Activated naive CD4-positive, alpha-beta T cell treated with anti-CD3 and anti-CD28 coated beads, Interleukin-2, amount 10 ng/mL, durations not matched to agents 7 days and 5 days (primary cell): ENCODE measurements at regions of chr3 and their contacts with region 1.

Region 1: DNA sequence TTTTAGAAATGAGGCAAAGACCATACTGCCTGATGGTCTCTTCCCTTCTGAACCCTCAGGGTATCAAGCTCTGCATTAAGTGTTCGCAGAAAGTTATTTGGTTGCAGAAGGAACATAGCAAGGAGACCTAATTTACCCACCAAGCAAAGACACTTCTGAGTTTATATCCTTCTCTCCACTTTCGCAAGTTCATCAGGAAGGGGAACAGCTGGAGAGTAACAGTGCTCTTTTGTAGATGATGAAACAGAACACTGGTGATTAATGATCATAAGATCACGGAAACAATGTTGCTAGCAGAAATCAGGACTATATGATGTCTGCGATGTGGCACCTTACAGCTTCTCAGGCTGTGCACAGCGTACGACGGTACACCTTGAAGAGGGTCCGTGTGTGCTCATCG is 62.1 kb downstream of the NCEH1 start:
- DNase-seq: no peak
- H3K4me3 Mint-ChIP-seq: no peak overlapping the region
- H3K27ac Mint-ChIP-seq: no peak overlapping the region
- H3K4me1 Mint-ChIP-seq: no peaks in the 10 kb centered on the region
- H3K27me3 Mint-ChIP-seq: no peaks in the 10 kb centered on the region

Region 2: GRCh38 chr3:172208586-172209332 is 440.0 kb before region 1 on chr3:
- CTCF ChIA-PET with region 1: no interaction called
- DNase-seq: no peak
- H3K4me3 Mint-ChIP-seq: no peak overlapping the region
- H3K27ac Mint-ChIP-seq: no peak overlapping the region
- H3K4me1 Mint-ChIP-seq: no peaks in the 10 kb centered on the region
- H3K27me3 Mint-ChIP-seq: no peaks in the 10 kb centered on the region

Region 3: DNA sequence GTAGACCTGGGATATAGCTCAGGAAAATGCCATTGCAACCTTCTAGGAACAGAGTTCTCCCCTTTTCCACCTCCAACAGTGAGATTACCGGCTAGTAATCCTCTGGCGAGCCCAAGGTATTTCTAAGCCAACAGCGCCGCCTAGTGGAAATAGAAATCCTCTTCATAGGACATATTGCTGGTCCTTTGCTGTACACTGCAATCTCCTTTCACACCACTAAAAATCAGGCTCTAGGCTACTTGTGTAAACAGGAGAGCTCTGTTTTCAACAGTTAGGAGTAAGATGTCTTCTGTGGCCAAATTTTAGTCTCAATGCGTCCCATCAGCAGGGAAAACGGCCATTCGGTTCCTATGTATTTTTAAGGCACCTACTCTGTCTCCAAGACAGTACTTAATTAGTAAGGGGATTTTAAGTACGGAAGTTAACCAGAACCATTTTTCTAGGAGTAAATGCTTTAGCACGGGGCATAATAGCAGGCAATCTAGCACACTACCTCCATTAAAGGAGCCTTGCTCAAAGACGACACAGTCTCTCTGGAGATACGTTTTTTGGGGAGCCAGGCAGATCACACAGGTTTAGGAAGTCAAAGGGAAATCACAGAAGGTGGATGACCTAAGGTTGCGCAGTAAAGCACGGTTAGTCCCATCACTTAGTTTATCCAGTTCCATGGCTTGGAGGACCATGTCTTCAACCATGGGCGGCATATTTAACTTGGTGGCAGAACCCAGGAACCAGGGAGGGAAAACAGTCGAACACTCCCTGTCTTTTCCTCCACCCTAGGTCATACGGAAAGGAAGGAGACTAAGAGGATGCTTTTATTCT is 18.3 kb after region 1 on chr3:
- CTCF ChIA-PET with region 1: interaction called, 17 read pairs
- DNase-seq: peak; percentile 87
- H3K4me3 Mint-ChIP-seq: no peak overlapping the region
- H3K27ac Mint-ChIP-seq: no peak overlapping the region
- H3K4me1 Mint-ChIP-seq: peaks cover 23% of the 10 kb centered on the region
- H3K27me3 Mint-ChIP-seq: peaks cover 11% of the 10 kb centered on the region